IMR-90 (cell line): ENCODE measurements at regions of chr14 and their contacts with region 1.

Region 1: GRCh38 chr14:56339855-56340701 is 221.9 kb downstream of the PELI2 start:
- DNase-seq: peak; percentile 98
- ATAC-seq: peak; percentile 87
- H3K4me3 ChIP-seq: no peak overlapping the region
- H3K27ac ChIP-seq: peak overlapping the region; percentile 93
- H3K4me1 ChIP-seq: peaks cover 32% of the 10 kb centered on the region
- H3K27me3 ChIP-seq: no peaks in the 10 kb centered on the region
- CTCF ChIP-seq: peak; percentile 97
- POLR2A ChIP-seq: no peak
- RAD21 ChIP-seq: peak; percentile 99

Region 2: GRCh38 chr14:55446218-55446654 is 893.8 kb before region 1 on chr14:
- CTCF ChIA-PET with region 1: no interaction called
- POLR2A ChIA-PET with region 1: no interaction called
- dilution Hi-C with region 1: no loop called
- in situ Hi-C with region 1: loop called (anchors 25 kb)
- intact Hi-C with region 1: no loop called
- DNase-seq: peak; percentile 86
- ATAC-seq: peak; percentile 38
- H3K4me3 ChIP-seq: no peak overlapping the region
- H3K27ac ChIP-seq: no peak overlapping the region
- H3K4me1 ChIP-seq: peaks cover 8% of the 10 kb centered on the region
- H3K27me3 ChIP-seq: no peaks in the 10 kb centered on the region
- CTCF ChIP-seq: peak; percentile 72
- POLR2A ChIP-seq: no peak; the same call in 1 of the 2 replicates
- RAD21 ChIP-seq: peak; percentile 75

Region 3: GRCh38 chr14:55731881-55732498 is 608.1 kb before region 1 on chr14:
- CTCF ChIA-PET with region 1: interaction called, 5 read pairs
- POLR2A ChIA-PET with region 1: no interaction called
- dilution Hi-C with region 1: no loop called
- in situ Hi-C with region 1: no loop called
- intact Hi-C with region 1: loop called (anchors 1 kb)
- DNase-seq: peak; percentile 24
- ATAC-seq: peak; percentile 66
- H3K4me3 ChIP-seq: no peak overlapping the region
- H3K27ac ChIP-seq: no peak overlapping the region
- H3K4me1 ChIP-seq: no peaks in the 10 kb centered on the region
- H3K27me3 ChIP-seq: no peaks in the 10 kb centered on the region
- CTCF ChIP-seq: peak; percentile 64
- POLR2A ChIP-seq: no peak
- RAD21 ChIP-seq: peak; percentile 72

Region 4: GRCh38 chr14:56004786-56005185 is 335.3 kb before region 1 on chr14:
- CTCF ChIA-PET with region 1: interaction called, 3 read pairs
- POLR2A ChIA-PET with region 1: no interaction called
- dilution Hi-C with region 1: no loop called
- in situ Hi-C with region 1: no loop called
- intact Hi-C with region 1: loop called (anchors 1 kb)
- DNase-seq: peak; percentile 75
- ATAC-seq: peak; percentile 84
- H3K4me3 ChIP-seq: peak overlapping the region; percentile 24; the same call in 1 of the 2 replicates
- H3K27ac ChIP-seq: no peak overlapping the region
- H3K4me1 ChIP-seq: peaks cover 8% of the 10 kb centered on the region
- H3K27me3 ChIP-seq: no peaks in the 10 kb centered on the region
- CTCF ChIP-seq: no peak
- POLR2A ChIP-seq: peak; percentile 82
- RAD21 ChIP-seq: no peak

Region 5: GRCh38 chr14:56195704-56196103 is 144.4 kb before region 1 on chr14:
- CTCF ChIA-PET with region 1: interaction called, 3 read pairs
- POLR2A ChIA-PET with region 1: no interaction called
- dilution Hi-C with region 1: no loop called
- in situ Hi-C with region 1: no loop called
- intact Hi-C with region 1: loop called (anchors 1 kb)
- DNase-seq: peak; percentile 58
- ATAC-seq: no peak
- H3K4me3 ChIP-seq: no peak overlapping the region
- H3K27ac ChIP-seq: no peak overlapping the region
- H3K4me1 ChIP-seq: peaks cover 18% of the 10 kb centered on the region
- H3K27me3 ChIP-seq: no peaks in the 10 kb centered on the region
- CTCF ChIP-seq: no peak
- POLR2A ChIP-seq: no peak
- RAD21 ChIP-seq: no peak

Region 6: GRCh38 chr14:56422703-56423213 is 82.7 kb after region 1 on chr14:
- CTCF ChIA-PET with region 1: interaction called, 14 read pairs
- POLR2A ChIA-PET with region 1: no interaction called
- dilution Hi-C with region 1: no loop called
- in situ Hi-C with region 1: no loop called
- intact Hi-C with region 1: loop called (anchors 2 kb)
- DNase-seq: peak; percentile 79
- ATAC-seq: peak; percentile 92
- H3K4me3 ChIP-seq: no peak overlapping the region
- H3K27ac ChIP-seq: no peak overlapping the region
- H3K4me1 ChIP-seq: peaks cover 10% of the 10 kb centered on the region; the same call in 1 of the 2 replicates
- H3K27me3 ChIP-seq: peaks cover 22% of the 10 kb centered on the region
- CTCF ChIP-seq: peak; percentile 89
- POLR2A ChIP-seq: no peak
- RAD21 ChIP-seq: peak; percentile 85